ENCODE measurements at regions of chr7 and their contacts with region 1.

Region 1: GRCh38 chr7:107563775-107564552 is at the starts of genes COG5 and DUS4L:
- DNase-seq: peak; percentile 96
- H3K4me3 ChIP-seq: peak within 1 kb of the TSS; percentile 88 to 100
- H3K27ac ChIP-seq: peak within 1 kb of the TSS; percentile 92 to 96
- H3K4me1 ChIP-seq: peaks cover 17 to 28% of the 10 kb centered on the region in 2 experiments; a peak in 3 of 4 replicates
- H3K27me3 ChIP-seq: no peaks in the 10 kb centered on the region
- CTCF ChIP-seq: no peak
- EP300 ChIP-seq: no peak
- RAD21 ChIP-seq: no peak; the same call in 1 of the 2 replicates
- polyA plus RNA-seq, gene COG5: 21.2 and 28.6 TPM in 2 replicates
- polyA plus RNA-seq, gene DUS4L: 9.7 and 11.5 TPM in 2 replicates

Region 2: DNA sequence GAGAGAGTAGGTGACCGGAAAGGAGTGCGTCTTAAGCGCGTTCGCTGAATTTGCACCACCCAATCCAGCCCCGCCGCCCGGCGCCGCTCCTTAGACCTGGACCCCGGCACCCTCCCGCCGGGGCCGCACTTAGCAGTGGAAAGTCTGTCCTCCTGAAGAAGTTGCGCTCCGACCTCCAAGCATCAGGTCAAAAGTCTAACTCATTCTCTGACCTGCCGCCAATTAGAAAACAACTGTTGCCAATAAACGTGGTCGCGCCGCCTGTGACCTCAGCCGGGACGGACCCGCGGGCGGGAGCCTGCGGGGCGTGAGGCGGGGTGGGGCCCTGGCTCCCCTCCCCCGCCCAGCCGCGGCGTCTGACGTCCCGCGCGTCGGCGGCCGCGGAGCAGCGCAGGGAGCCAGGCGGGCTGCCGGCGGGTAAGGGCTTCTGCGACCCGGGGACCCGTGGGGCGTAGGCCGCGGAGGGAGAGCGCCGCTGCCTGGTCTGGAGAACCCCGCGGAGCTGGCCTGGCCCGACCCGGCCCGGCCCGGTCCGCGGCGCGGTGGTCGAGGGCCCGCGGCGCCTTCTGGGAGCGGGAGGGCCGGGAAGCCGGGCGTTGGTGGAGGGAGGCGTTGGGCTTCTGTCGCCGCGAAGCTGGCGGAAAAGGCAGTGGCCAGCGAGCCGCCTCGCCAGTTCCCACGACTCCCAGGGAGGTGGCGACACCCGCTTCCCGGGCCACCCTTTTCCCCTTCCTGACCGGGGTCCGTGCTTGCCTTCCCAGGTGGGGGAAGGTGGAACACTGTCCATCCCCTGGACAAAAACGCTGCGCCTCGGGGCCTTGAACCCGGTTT is 16.1 kb after region 1 on chr7 and contains the start of gene BCAP29:
- CTCF ChIA-PET with region 1: interaction called, 5 read pairs
- POLR2A ChIA-PET with region 1: interaction called, 14 read pairs
- DNase-seq: peak; percentile 96
- H3K4me3 ChIP-seq: peak within 1 kb of the TSS; percentile 77 to 98
- H3K27ac ChIP-seq: peak within 1 kb of the TSS; percentile 68 to 95
- H3K4me1 ChIP-seq: peaks cover 12 to 23% of the 10 kb centered on the region in 2 experiments; a peak in 2 of 4 replicates
- H3K27me3 ChIP-seq: no peaks in the 10 kb centered on the region
- CTCF ChIP-seq: peak; percentile 41
- EP300 ChIP-seq: peak in 1 of 2 experiments; percentile 33; a peak in 1 of 4 replicates
- RAD21 ChIP-seq: peak; percentile 66
- polyA plus RNA-seq, gene BCAP29: 29.2 and 46.2 TPM in 2 replicates

Region 3: DNA sequence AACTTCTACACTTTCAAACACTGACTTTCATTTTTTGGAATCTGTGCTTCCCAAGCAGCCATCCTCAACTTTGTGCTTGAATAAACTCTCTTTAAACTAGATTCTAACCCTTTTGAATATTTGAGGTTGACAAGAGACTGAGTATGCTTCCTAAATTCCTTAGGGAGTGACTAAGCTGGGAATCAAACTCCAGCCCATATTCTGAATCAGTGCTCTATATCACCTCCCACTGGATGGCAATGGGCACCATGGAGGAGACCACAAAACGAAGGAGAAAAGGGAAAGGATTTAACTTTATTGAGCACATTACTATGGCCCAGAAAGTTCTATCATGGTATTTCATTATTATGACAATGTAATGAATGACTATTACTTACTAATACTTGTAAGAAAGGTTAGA is 79.4 kb after region 1 on chr7:
- CTCF ChIA-PET with region 1: no interaction called
- POLR2A ChIA-PET with region 1: no interaction called
- DNase-seq: no peak
- H3K4me3 ChIP-seq: no peak overlapping the region
- H3K27ac ChIP-seq: peak overlapping the region in 1 of 2 experiments; percentile 32; a peak in 2 of 4 replicates
- H3K4me1 ChIP-seq: peaks cover 3 to 13% of the 10 kb centered on the region in 2 experiments; a peak in 2 of 4 replicates
- H3K27me3 ChIP-seq: no peaks in the 10 kb centered on the region
- CTCF ChIP-seq: peak; percentile 64
- EP300 ChIP-seq: no peak
- RAD21 ChIP-seq: no peak

Region 4: DNA sequence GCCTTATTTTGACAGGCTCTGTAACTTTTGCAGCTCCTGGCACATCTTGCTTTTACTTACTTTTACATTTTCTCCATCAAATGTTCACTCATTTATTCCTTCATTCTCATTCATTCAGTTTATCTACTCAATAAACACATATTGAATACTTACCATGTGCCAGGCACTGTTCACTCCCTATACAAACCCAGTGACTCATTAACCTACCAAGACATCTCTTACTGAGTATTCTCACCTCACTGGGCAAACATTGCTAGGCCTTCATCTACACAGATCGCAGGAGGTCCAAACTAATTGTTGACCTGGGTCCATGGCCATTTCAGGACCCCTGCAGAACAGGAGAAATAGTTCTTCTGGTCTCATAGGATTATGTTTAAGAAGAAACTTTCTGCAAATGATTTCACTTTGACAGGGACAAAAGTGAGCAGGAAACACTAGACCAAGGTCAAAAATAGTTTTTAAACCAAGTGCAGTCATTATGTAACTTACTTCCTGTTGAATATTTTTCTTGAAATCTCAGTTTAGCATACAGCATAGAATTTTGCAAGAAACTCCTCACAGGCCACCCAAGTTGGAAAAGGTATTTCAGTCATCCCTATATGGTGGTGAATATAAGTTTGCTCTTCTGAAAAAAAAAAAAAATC is 114.3 kb after region 1 on chr7:
- CTCF ChIA-PET with region 1: no interaction called
- POLR2A ChIA-PET with region 1: no interaction called
- DNase-seq: no peak
- H3K4me3 ChIP-seq: no peak overlapping the region
- H3K27ac ChIP-seq: no peak overlapping the region
- H3K4me1 ChIP-seq: no peaks in the 10 kb centered on the region; a peak in 1 of 4 replicates
- H3K27me3 ChIP-seq: no peaks in the 10 kb centered on the region
- CTCF ChIP-seq: no peak
- EP300 ChIP-seq: no peak
- RAD21 ChIP-seq: no peak